ENCODE measurements at regions of chr7 and their contacts with region 1.

Region 1: DNA sequence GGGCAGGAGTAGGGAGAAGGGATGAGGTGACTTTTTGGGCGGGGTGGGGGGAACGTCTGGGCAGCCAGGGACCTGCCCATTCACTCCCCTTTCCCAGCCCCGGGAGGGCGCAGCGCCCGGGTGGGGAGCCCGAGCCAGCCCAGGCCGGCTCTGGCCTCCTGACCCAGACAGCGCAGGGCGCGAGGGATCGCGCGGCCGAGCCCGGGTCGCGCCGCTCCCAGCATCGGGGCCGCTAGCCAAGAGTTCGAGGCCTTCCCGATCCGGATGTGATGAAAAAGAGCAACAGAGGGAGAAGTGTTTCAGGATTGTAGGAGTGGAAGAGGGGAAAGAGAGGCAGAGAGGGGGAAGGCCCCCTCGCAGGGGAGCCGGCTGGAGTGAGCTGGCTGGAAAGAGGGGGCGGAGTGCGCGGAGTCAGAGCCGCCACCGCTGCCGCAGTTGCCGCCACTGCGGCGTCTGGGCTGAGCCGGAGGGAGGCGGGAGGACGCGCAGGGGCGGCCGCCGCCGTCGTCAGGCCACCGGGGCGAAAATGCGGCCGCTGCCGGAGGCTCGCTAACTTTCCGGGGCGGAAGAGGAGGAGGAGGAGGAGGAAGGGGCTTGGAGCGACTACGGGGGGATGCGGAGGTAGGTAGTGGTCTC is at the start of gene MDFIC:
- DNase-seq: peak; percentile 42 to 84 (median 48)
- ATAC-seq: peak; percentile 73
- H3K4me3 ChIP-seq: peak within 1 kb of the TSS; percentile 80
- H3K4me3 Mint-ChIP-seq: peak within 1 kb of the TSS; percentile 85 to 99 (median 92)
- H3K27ac ChIP-seq: peak within 1 kb of the TSS; percentile 86
- H3K27ac Mint-ChIP-seq: peak within 1 kb of the TSS; percentile 86 to 97 (median 93)
- H3K4me1 ChIP-seq: peaks cover 15 to 21% of the 10 kb centered on the region in 2 donors
- H3K4me1 Mint-ChIP-seq: peaks cover 25 to 53% (median 46%) of the 10 kb centered on the region in 7 donors
- H3K27me3 ChIP-seq: no peaks in the 10 kb centered on the region
- H3K27me3 Mint-ChIP-seq: no peaks in the 10 kb centered on the region
- total RNA-seq, gene MDFIC: 48.5 to 84.5 (median 57.0) TPM

Region 2: DNA sequence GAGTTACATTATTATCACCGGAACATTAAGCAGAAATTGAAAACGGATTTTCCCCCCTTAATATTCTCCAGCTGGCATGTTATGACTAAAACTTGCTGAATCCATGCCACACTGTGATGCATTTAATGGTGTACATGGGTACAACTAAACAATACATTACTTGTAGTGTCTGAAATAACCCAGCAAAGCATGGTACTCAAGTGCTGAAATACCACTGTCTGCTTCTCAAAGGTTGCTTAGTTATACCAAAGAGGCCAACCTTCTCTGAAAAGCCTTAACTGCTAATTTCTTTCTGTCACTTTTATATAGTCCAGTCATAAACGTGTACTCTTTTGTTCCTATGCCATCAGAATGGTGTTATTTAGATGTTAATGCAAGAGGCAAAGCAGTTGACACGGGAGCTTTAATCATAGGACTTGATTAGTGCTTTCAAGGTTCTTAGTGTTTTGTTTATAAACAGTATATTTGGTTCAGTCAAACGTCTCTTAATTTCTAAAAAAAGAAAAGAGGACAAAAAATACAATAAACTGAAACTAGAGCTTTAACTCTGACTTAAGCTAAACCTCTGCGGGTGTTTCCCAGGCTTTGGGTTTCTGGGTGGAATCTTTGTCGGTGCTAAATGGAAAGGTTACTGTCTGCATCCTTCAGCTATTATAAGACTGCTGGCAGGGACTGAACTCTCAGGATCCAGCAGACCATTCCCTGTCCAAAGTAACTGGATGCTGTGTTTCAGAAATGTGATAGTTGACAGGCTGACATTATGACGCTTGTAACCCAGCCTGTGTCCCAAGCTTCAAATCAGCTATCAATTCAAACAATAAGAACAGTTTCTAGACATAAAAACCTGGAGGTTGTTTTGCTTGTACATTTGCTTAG is 1205.9 kb before region 1 on chr7:
- CTCF ChIA-PET with region 1: no interaction called
- POLR2A ChIA-PET with region 1: no interaction called
- intact Hi-C with region 1: no loop called
- DNase-seq: no peak
- ATAC-seq: no peak
- H3K4me3 ChIP-seq: no peak overlapping the region
- H3K4me3 Mint-ChIP-seq: no peak overlapping the region
- H3K27ac ChIP-seq: no peak overlapping the region
- H3K27ac Mint-ChIP-seq: no peak overlapping the region
- H3K4me1 ChIP-seq: no peaks in the 10 kb centered on the region
- H3K4me1 Mint-ChIP-seq: no peaks in the 10 kb centered on the region
- H3K27me3 ChIP-seq: no peaks in the 10 kb centered on the region
- H3K27me3 Mint-ChIP-seq: no peaks in the 10 kb centered on the region

Region 3: DNA sequence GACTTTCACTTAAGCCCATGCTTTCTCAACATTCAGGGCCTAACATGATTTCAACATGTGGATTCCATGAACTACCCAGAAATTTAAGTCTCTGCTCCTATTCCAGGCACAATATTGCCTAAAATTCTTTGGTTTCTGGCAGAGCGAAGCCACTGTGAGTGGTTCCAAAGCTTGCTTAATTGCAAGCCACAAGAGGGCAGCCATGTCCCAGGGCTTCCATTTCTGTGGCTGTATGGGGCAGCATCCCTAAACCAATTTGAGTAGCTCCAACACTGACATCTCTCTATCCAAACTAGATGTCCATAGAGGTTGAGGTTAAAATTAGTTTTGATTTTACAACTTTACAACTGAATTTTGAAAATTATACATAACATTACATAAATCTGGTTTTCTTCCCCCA is 56.6 kb before region 1 on chr7:
- CTCF ChIA-PET with region 1: interaction called, 13 read pairs
- POLR2A ChIA-PET with region 1: interaction called, 3 read pairs
- intact Hi-C with region 1: loop called in 1 of 2 experiments (anchors 2 kb)
- DNase-seq: peak; percentile 12 to 60 (median 42)
- ATAC-seq: peak; percentile 81
- H3K4me3 ChIP-seq: no peak overlapping the region
- H3K4me3 Mint-ChIP-seq: no peak overlapping the region
- H3K27ac ChIP-seq: no peak overlapping the region
- H3K27ac Mint-ChIP-seq: no peak overlapping the region
- H3K4me1 ChIP-seq: no peaks in the 10 kb centered on the region
- H3K4me1 Mint-ChIP-seq: peaks cover 0 to 6% (median 0%) of the 10 kb centered on the region in 7 donors
- H3K27me3 ChIP-seq: no peaks in the 10 kb centered on the region
- H3K27me3 Mint-ChIP-seq: no peaks in the 10 kb centered on the region

Region 4: DNA sequence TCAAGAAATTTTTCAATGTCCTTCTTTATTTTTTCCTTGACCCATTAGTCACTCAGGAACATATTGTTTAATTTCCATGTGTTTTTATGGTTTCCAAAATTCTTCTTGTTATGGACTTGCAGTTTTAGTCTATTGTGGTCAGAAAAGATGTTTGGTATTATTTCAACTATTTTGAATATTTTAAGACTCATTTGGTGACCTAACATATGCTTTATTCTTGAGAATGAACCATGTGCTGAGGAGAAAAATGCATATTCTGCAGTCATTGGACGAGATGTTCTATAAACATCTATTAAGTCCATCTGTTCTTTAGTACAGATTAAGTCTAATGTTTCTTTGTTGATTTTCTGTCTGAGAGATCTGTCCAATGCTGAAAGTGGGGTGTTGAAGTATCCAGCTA is 42.6 kb before region 1 on chr7:
- CTCF ChIA-PET with region 1: no interaction called
- POLR2A ChIA-PET with region 1: no interaction called
- intact Hi-C with region 1: no loop called
- DNase-seq: no peak
- ATAC-seq: no peak
- H3K4me3 ChIP-seq: no peak overlapping the region
- H3K4me3 Mint-ChIP-seq: no peak overlapping the region
- H3K27ac ChIP-seq: no peak overlapping the region
- H3K27ac Mint-ChIP-seq: no peak overlapping the region
- H3K4me1 ChIP-seq: no peaks in the 10 kb centered on the region
- H3K4me1 Mint-ChIP-seq: no peaks in the 10 kb centered on the region
- H3K27me3 ChIP-seq: no peaks in the 10 kb centered on the region
- H3K27me3 Mint-ChIP-seq: no peaks in the 10 kb centered on the region

Region 5: DNA sequence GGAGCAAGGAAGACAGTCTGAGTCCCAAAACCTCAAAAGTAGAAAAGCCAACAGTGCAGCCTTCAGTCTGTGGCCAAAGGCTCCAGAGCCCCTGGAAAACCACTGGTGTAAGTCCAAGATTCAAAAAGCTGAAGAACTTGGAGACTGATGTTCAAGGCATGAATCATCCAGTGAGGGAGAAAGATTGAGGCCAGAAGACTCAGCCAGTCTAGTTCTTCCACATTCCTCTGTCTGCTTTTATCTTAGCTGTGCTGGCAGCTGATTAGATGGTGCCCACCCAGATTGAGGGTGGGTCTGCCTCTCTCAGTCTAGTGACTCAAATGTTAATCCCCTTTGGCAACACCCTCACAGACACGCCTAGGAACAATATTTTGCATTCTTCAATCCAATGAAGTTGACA is 20.4 kb before region 1 on chr7:
- CTCF ChIA-PET with region 1: no interaction called
- POLR2A ChIA-PET with region 1: no interaction called
- intact Hi-C with region 1: no loop called
- DNase-seq: no peak
- ATAC-seq: no peak
- H3K4me3 ChIP-seq: no peak overlapping the region
- H3K4me3 Mint-ChIP-seq: no peak overlapping the region
- H3K27ac ChIP-seq: no peak overlapping the region
- H3K27ac Mint-ChIP-seq: no peak overlapping the region
- H3K4me1 ChIP-seq: no peaks in the 10 kb centered on the region
- H3K4me1 Mint-ChIP-seq: no peaks in the 10 kb centered on the region
- H3K27me3 ChIP-seq: no peaks in the 10 kb centered on the region
- H3K27me3 Mint-ChIP-seq: no peaks in the 10 kb centered on the region

Region 6: DNA sequence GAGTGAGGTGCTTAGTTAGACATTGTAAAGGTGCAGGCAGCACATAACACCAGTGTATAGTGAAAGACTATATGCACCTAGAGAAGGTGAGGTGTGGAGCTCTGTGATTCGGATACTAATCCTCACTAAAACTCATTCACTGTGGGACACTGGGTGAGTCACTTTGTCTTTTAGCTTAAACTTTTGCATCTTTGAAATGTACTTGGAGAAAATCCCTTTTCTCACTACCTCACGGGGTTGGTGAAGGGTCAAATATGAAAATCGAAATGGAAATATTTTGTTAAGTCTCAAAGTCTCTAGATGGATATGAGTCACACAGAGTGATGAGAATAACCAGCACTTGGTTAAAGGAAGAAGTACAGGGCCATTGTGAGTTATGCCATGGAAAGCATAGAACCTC is 37.8 kb after region 1 on chr7:
- CTCF ChIA-PET with region 1: no interaction called
- POLR2A ChIA-PET with region 1: no interaction called
- intact Hi-C with region 1: loop called in 1 of 2 experiments (anchors 5 kb)
- DNase-seq: no peak
- ATAC-seq: no peak
- H3K4me3 ChIP-seq: no peak overlapping the region
- H3K4me3 Mint-ChIP-seq: no peak overlapping the region
- H3K27ac ChIP-seq: no peak overlapping the region
- H3K27ac Mint-ChIP-seq: peak overlapping the region in 2 of 9 donors; percentile 47 to 56
- H3K4me1 ChIP-seq: peaks cover 6 to 39% of the 10 kb centered on the region in 2 donors
- H3K4me1 Mint-ChIP-seq: peaks cover 37 to 79% (median 58%) of the 10 kb centered on the region in 7 donors
- H3K27me3 ChIP-seq: no peaks in the 10 kb centered on the region
- H3K27me3 Mint-ChIP-seq: no peaks in the 10 kb centered on the region

Region 7: GRCh38 chr7:115019882-115020605 is 97.9 kb after region 1 on chr7:
- CTCF ChIA-PET with region 1: no interaction called
- POLR2A ChIA-PET with region 1: no interaction called
- intact Hi-C with region 1: loop called in 1 of 2 experiments (anchors 5 kb)
- DNase-seq: no peak
- ATAC-seq: peak; percentile 69
- H3K4me3 ChIP-seq: no peak overlapping the region
- H3K4me3 Mint-ChIP-seq: no peak overlapping the region
- H3K27ac ChIP-seq: no peak overlapping the region
- H3K27ac Mint-ChIP-seq: peak overlapping the region; percentile 5 to 90 (median 14)
- H3K4me1 ChIP-seq: peaks cover 19 to 21% of the 10 kb centered on the region in 2 donors
- H3K4me1 Mint-ChIP-seq: peaks cover 18 to 66% (median 41%) of the 10 kb centered on the region in 7 donors
- H3K27me3 ChIP-seq: no peaks in the 10 kb centered on the region
- H3K27me3 Mint-ChIP-seq: no peaks in the 10 kb centered on the region

Region 8: GRCh38 chr7:115060095-115060870 is 138.1 kb after region 1 on chr7:
- CTCF ChIA-PET with region 1: no interaction called
- POLR2A ChIA-PET with region 1: no interaction called
- intact Hi-C with region 1: no loop called
- DNase-seq: no peak
- ATAC-seq: peak; percentile 49
- H3K4me3 ChIP-seq: no peak overlapping the region
- H3K4me3 Mint-ChIP-seq: no peak overlapping the region
- H3K27ac ChIP-seq: no peak overlapping the region
- H3K27ac Mint-ChIP-seq: no peak overlapping the region
- H3K4me1 ChIP-seq: no peaks in the 10 kb centered on the region
- H3K4me1 Mint-ChIP-seq: no peaks in the 10 kb centered on the region
- H3K27me3 ChIP-seq: no peaks in the 10 kb centered on the region
- H3K27me3 Mint-ChIP-seq: peaks cover 0 to 5% (median 0%) of the 10 kb centered on the region in 5 donors

Region 9: GRCh38 chr7:116211006-116211912 is 1289.1 kb after region 1 on chr7:
- CTCF ChIA-PET with region 1: no interaction called
- POLR2A ChIA-PET with region 1: no interaction called
- intact Hi-C with region 1: loop called (anchors 2 to 5 kb)
- DNase-seq: peak; percentile 54 to 89 (median 84)
- ATAC-seq: peak; percentile 87
- H3K4me3 ChIP-seq: peak overlapping the region; percentile 92
- H3K4me3 Mint-ChIP-seq: peak overlapping the region; percentile 84 to 99 (median 98)
- H3K27ac ChIP-seq: peak overlapping the region; percentile 93
- H3K27ac Mint-ChIP-seq: peak overlapping the region; percentile 94 to 99 (median 97)
- H3K4me1 ChIP-seq: peaks cover 28 to 42% of the 10 kb centered on the region in 2 donors
- H3K4me1 Mint-ChIP-seq: peaks cover 43 to 71% (median 59%) of the 10 kb centered on the region in 7 donors
- H3K27me3 ChIP-seq: no peaks in the 10 kb centered on the region
- H3K27me3 Mint-ChIP-seq: no peaks in the 10 kb centered on the region

Measured in naive thymus-derived CD4-positive, alpha-beta T cell (primary cell).